PC-9 (cell line): ENCODE measurements at regions of chr3 and their contacts with region 1.

Region 1: DNA sequence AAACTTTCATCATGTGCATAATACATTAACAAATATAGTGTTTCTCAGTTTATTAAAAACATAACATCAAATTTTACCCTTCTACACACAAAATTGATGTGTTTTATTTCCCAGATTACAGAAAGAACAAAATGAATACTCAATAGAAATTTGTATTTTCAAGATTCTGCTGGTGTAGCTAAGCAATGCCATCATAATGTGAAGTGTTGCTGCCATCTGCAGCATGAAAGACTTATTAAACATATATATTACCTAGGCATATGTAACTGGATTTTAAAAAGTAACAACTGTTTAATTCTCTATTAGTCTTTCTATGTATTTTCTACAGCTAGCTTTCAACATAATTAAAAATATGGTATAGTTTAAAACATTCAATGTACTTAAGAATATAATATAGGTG is 27.5 kb downstream of the PLSCR5 start:
- DNase-seq: peak in 1 of 2 experiments; percentile 12
- H3K4me3 ChIP-seq: no peak overlapping the region
- H3K27ac ChIP-seq: no peak overlapping the region
- H3K4me1 ChIP-seq: no peaks in the 10 kb centered on the region
- H3K27me3 ChIP-seq: no peaks in the 10 kb centered on the region
- CTCF ChIP-seq: peak; percentile 67

Region 2: GRCh38 chr3:145798692-145799537 is 778.7 kb before region 1 on chr3:
- CTCF ChIA-PET with region 1: no interaction called
- POLR2A ChIA-PET with region 1: no interaction called
- intact Hi-C with region 1: loop called (anchors 10 kb)
- DNase-seq: no peak
- H3K4me3 ChIP-seq: no peak overlapping the region
- H3K27ac ChIP-seq: no peak overlapping the region
- H3K4me1 ChIP-seq: no peaks in the 10 kb centered on the region
- H3K27me3 ChIP-seq: no peaks in the 10 kb centered on the region
- CTCF ChIP-seq: no peak

Region 3: DNA sequence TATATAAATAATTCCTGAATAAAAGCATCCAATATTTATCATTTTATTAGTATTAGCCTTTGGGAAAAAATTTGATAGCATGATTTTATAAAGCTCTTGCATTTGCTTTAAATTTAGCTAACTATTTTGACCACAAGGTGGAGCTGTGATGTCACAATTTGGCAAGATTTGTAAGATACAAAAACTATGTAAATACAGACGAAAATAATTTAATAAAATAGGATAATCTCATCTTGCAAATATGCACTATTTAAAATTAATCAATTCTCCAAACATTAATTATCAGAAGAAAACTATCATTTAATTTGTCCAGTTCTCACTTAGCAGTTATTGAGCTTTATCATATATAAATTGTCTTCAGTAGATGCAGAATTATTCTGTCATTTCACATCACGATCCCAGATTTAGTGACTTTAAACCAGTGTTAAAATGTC is 512.1 kb before region 1 on chr3:
- CTCF ChIA-PET with region 1: no interaction called
- POLR2A ChIA-PET with region 1: no interaction called
- intact Hi-C with region 1: loop called (anchors 2 kb)
- DNase-seq: peak; percentile 15 to 37
- H3K4me3 ChIP-seq: no peak overlapping the region
- H3K27ac ChIP-seq: no peak overlapping the region
- H3K4me1 ChIP-seq: 0 out of 2 replicates have a peak, but pooled peaks cover 9% of the 10 kb centered on the region
- H3K27me3 ChIP-seq: no peaks in the 10 kb centered on the region
- CTCF ChIP-seq: peak; percentile 91

Region 4: DNA sequence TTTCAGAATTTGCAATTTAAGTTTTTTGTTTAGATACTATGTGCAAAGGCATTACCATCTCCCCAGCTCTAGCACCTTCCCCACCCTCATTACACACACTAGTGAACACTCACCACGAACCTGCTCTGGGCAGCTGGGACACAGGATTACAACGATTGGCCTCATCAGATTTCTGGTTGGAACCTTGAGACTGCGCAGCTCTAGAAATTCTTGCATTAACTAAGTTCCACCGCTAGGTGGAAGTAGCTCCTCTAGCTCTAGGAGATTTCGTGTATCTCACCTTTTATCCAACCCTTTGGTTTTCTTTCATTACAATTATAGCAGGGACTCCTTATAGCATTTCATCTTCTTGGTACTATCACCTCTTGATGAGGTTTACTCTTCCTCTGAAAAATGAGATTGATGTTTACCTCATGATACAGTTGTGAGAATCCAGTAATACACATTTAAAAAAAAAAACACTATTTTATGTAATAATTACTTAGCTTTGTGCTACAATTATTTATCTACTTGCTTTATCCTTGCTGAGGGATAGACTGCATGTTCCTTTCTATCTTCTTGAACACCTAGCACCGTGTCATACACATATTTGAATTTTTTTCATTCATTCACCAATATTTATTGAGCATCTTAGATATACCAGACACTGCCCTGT is 388.0 kb before region 1 on chr3:
- CTCF ChIA-PET with region 1: interaction called, 20 read pairs
- POLR2A ChIA-PET with region 1: no interaction called
- intact Hi-C with region 1: loop called (anchors 1 kb)
- DNase-seq: peak; percentile 16 to 45
- H3K4me3 ChIP-seq: no peak overlapping the region
- H3K27ac ChIP-seq: no peak overlapping the region
- H3K4me1 ChIP-seq: no peaks in the 10 kb centered on the region
- H3K27me3 ChIP-seq: no peaks in the 10 kb centered on the region
- CTCF ChIP-seq: peak; percentile 82

Region 5: GRCh38 chr3:146218880-146219866 is 358.5 kb before region 1 on chr3:
- CTCF ChIA-PET with region 1: interaction called, 4 read pairs
- POLR2A ChIA-PET with region 1: no interaction called
- intact Hi-C with region 1: loop called (anchors 1 kb)
- DNase-seq: peak in 1 of 2 experiments; percentile 18
- H3K4me3 ChIP-seq: no peak overlapping the region
- H3K27ac ChIP-seq: no peak overlapping the region
- H3K4me1 ChIP-seq: 0 out of 2 replicates have a peak, but pooled peaks cover 6% of the 10 kb centered on the region
- H3K27me3 ChIP-seq: no peaks in the 10 kb centered on the region
- CTCF ChIP-seq: peak; percentile 85

Region 6: GRCh38 chr3:146334151-146334550 is 243.5 kb before region 1 on chr3:
- CTCF ChIA-PET with region 1: no interaction called
- POLR2A ChIA-PET with region 1: no interaction called
- intact Hi-C with region 1: loop called (anchors 2 kb)
- DNase-seq: no peak
- H3K4me3 ChIP-seq: no peak overlapping the region
- H3K27ac ChIP-seq: no peak overlapping the region
- H3K4me1 ChIP-seq: no peaks in the 10 kb centered on the region
- H3K27me3 ChIP-seq: no peaks in the 10 kb centered on the region
- CTCF ChIP-seq: no peak

Region 7: GRCh38 chr3:146503461-146504202 is 74.0 kb before region 1 on chr3:
- CTCF ChIA-PET with region 1: no interaction called
- POLR2A ChIA-PET with region 1: no interaction called
- intact Hi-C with region 1: loop called (anchors 2 kb)
- DNase-seq: peak; percentile 70 to 93
- H3K4me3 ChIP-seq: peak overlapping the region; percentile 53
- H3K27ac ChIP-seq: peak overlapping the region; percentile 100
- H3K4me1 ChIP-seq: peaks cover 54% of the 10 kb centered on the region
- H3K27me3 ChIP-seq: no peaks in the 10 kb centered on the region
- CTCF ChIP-seq: peak; percentile 43; the same call in 1 of the 2 replicates

Region 8: GRCh38 chr3:146827391-146827790 is 249.7 kb after region 1 on chr3:
- CTCF ChIA-PET with region 1: no interaction called
- POLR2A ChIA-PET with region 1: no interaction called
- intact Hi-C with region 1: no loop called
- DNase-seq: no peak
- H3K4me3 ChIP-seq: no peak overlapping the region
- H3K27ac ChIP-seq: no peak overlapping the region
- H3K4me1 ChIP-seq: no peaks in the 10 kb centered on the region
- H3K27me3 ChIP-seq: no peaks in the 10 kb centered on the region
- CTCF ChIP-seq: no peak